ENCODE measurements at regions of chr9 and their contacts with region 1.

Region 1: GRCh38 chr9:130042833-130043653 is at the start of gene FNBP1:
- DNase-seq: peak; percentile 76 to 87 (median 82)
- H3K4me3 ChIP-seq: peak within 1 kb of the TSS; percentile 37 to 95 (median 77)
- H3K27ac ChIP-seq: peak within 1 kb of the TSS; percentile 57 to 96 (median 89)
- H3K4me1 ChIP-seq: peaks cover 10 to 41% of the 10 kb centered on the region in 2 donors
- H3K27me3 ChIP-seq: no peaks in the 10 kb centered on the region
- CTCF ChIP-seq: peak in 2 of 6 experiments; percentile 17 to 21
- POLR2A ChIP-seq: peak; percentile 66 to 75
- total RNA-seq, gene FNBP1: 22.6 to 40.4 (median 24.3) TPM

Region 2: GRCh38 chr9:129889941-129890717 is 152.9 kb before region 1 on chr9:
- intact Hi-C with region 1: loop called (anchors 5 to 10 kb)
- DNase-seq: no peak
- H3K4me3 ChIP-seq: no peak overlapping the region
- H3K27ac ChIP-seq: peak overlapping the region in 1 of 5 donors; percentile 53
- H3K4me1 ChIP-seq: peaks cover 9 to 28% of the 10 kb centered on the region in 2 donors
- H3K27me3 ChIP-seq: no peaks in the 10 kb centered on the region
- CTCF ChIP-seq: no peak
- POLR2A ChIP-seq: no peak

Region 3: GRCh38 chr9:130254752-130255630 is 211.9 kb after region 1 on chr9:
- intact Hi-C with region 1: no loop called
- DNase-seq: no peak
- H3K4me3 ChIP-seq: no peak overlapping the region
- H3K27ac ChIP-seq: no peak overlapping the region
- H3K4me1 ChIP-seq: no peaks in the 10 kb centered on the region
- H3K27me3 ChIP-seq: peaks cover 8% of the 10 kb centered on the region
- CTCF ChIP-seq: no peak
- POLR2A ChIP-seq: no peak

Measured in adrenal gland (tissue), 19 donors.